ENCODE measurements at regions of chr5 and their contacts with region 1.

Region 1: DNA sequence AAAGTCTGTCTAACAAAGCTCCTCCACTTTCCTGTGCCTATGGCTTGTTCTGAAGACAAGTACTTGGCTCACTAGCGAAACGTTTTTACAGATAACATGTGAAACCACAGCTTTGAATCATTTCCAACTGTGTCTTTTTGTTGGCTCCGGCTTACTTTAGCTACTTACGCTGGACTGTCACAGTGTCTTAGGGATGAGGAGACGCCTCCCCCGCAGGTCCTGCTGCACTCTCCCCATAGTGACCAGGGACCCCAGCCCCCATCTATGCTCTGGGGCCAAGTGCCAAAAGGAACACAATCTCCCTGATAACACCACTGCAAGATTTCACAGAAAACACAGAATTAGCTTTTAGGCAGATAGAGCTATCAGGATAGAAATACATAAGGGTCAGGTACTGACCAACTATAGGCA is 219.1 kb downstream of the ADAMTS6 start:
- DNase-seq: peak; percentile 76
- H3K4me3 ChIP-seq: peak overlapping the region in 1 of 3 experiments; percentile 29
- H3K27ac ChIP-seq: peak overlapping the region; percentile 62
- H3K4me1 ChIP-seq: peaks cover 28% of the 10 kb centered on the region
- H3K27me3 ChIP-seq: no peaks in the 10 kb centered on the region
- CTCF ChIP-seq: no peak
- POLR2A ChIP-seq: no peak

Region 2: DNA sequence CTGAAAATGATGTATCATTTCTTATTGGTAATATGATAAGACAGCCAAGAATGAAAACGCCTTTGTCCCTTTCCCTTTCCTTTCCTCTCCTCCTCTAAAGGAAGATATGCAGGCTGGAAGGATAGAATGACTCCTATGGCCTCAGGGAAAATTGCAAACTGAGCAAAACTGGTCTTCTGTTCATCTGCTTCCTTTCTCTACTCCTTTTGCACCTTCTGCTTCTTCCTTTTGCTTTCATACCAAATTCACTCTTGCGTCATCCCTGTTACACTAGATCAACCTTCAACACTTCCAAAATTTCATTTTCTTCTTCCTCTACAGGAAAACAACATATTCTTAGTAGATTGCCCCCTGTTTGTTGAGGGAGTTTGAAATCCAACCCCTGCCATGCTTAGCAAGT is 15.1 kb before region 1 on chr5:
- CTCF ChIA-PET with region 1: interaction called, 15 read pairs
- POLR2A ChIA-PET with region 1: no interaction called
- dilution Hi-C with region 1: no loop called
- intact Hi-C with region 1: no loop called
- DNase-seq: no peak
- H3K4me3 ChIP-seq: no peak overlapping the region
- H3K27ac ChIP-seq: no peak overlapping the region
- H3K4me1 ChIP-seq: peaks cover 10% of the 10 kb centered on the region
- H3K27me3 ChIP-seq: no peaks in the 10 kb centered on the region
- CTCF ChIP-seq: no peak
- POLR2A ChIP-seq: no peak

Measured in endothelial cell of umbilical vein (primary cell).